Dorsolateral prefrontal cortex (tissue), 120 donors: ENCODE measurements at regions of chr12 and their contacts with region 1.

Region 1: GRCh38 chr12:124567661-124568373 is 405 bp upstream of the NCOR2 start:
- DNase-seq: peak; percentile 82 to 94 (median 92)
- H3K4me3 ChIP-seq: peak overlapping the region; percentile 26 to 97 (median 51)
- H3K27ac ChIP-seq: peak overlapping the region; percentile 53 to 94 (median 87)
- H3K27me3 ChIP-seq: no peaks in the 10 kb centered on the region
- CTCF ChIP-seq: peak in 32 of 56 donors; percentile 3 to 48 (median 22)

Region 2: GRCh38 chr12:124388679-124389536 is 178.9 kb before region 1 on chr12:
- intact Hi-C with region 1: loop called in 1 of 2 experiments (anchors 10 kb)
- DNase-seq: peak; percentile 74 to 94 (median 88)
- H3K4me3 ChIP-seq: peak overlapping the region; percentile 41 to 83 (median 62)
- H3K27ac ChIP-seq: peak overlapping the region; percentile 70 to 98 (median 92)
- H3K27me3 ChIP-seq: no peaks in the 10 kb centered on the region
- CTCF ChIP-seq: peak in 14 of 56 donors; percentile 4 to 40 (median 21)

Region 3: GRCh38 chr12:124518051-124518932 is 49.5 kb before region 1 on chr12:
- intact Hi-C with region 1: loop called (anchors 1 kb)
- DNase-seq: peak; percentile 93 to 99 (median 97)
- H3K4me3 ChIP-seq: peak overlapping the region; percentile 44 to 82 (median 66)
- H3K27ac ChIP-seq: peak overlapping the region; percentile 94 to 100 (median 99)
- H3K27me3 ChIP-seq: no peaks in the 10 kb centered on the region
- CTCF ChIP-seq: peak in 6 of 56 donors; percentile 12 to 22 (median 16)

Region 4: GRCh38 chr12:124655698-124656516 is 88.1 kb after region 1 on chr12:
- intact Hi-C with region 1: loop called (anchors 2 kb)
- DNase-seq: peak; percentile 63 to 90 (median 84)
- H3K4me3 ChIP-seq: peak overlapping the region in 51 of 59 donors; percentile 4 to 55 (median 36)
- H3K27ac ChIP-seq: peak overlapping the region; percentile 21 to 96 (median 91)
- H3K27me3 ChIP-seq: no peaks in the 10 kb centered on the region
- CTCF ChIP-seq: peak in 1 of 56 donors; percentile 5

Region 5: DNA sequence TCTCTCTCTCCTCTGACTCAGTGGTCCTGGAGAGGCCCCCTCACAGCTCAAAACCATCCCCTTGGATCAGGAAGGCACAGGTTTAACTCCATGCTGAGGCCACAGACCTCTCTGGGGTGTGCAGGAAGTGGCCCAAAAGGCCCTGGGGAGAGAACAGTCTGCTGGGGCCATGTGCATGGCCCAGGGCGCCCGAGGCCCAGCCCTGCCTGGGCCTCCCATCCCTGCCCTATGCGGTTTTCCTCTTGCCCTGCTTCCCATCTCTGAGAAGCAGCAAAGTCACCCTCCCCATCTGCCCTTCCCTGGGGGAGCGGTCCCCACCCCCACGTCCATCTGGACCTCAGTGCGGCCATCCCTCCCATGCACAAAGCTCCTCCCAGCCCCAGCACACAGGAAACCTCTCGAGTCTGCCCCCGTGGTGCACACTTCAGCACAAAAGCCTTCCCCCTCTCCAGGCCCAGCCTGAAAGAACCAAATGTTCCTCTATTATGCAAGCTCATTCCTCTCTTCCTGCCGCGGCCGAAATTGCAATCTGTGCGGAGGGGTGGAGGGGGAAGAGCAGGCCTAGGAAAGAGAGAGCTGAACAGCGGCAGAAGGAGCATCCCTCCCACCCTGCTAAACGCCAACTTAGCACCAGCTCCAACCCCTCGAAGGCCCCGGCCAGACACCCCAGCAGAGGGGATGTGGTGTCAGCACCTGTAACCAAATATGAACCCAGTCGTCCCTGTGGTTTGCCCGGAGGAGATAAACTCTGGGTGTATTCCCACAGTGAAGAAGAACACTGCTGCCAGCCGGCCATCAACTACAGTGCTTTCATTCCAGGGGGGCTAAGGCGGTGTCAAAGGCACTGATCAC is 187.4 kb after region 1 on chr12:
- intact Hi-C with region 1: loop called in 1 of 2 experiments (anchors 5 kb)
- DNase-seq: peak; percentile 77 to 95 (median 91)
- H3K4me3 ChIP-seq: peak overlapping the region in 5 of 59 donors; percentile 2 to 10 (median 10)
- H3K27ac ChIP-seq: peak overlapping the region; percentile 73 to 99 (median 96)
- H3K27me3 ChIP-seq: no peaks in the 10 kb centered on the region
- CTCF ChIP-seq: peak in 13 of 56 donors; percentile 5 to 35 (median 25)